Activated T-helper 2 cell treated with anti-CD3 and anti-CD28 coated beads, Interferon-gamma antibody, Interleukin-2, Interleukin-4, amounts not matched to agents 10 μg/mL and 5 μg/mL and 100 μg/mL, durations not matched to agents 14 hours and 24 hours and 36 hours (primary cell): ENCODE measurements at regions of chr14 and their contacts with region 1.

Region 1: DNA sequence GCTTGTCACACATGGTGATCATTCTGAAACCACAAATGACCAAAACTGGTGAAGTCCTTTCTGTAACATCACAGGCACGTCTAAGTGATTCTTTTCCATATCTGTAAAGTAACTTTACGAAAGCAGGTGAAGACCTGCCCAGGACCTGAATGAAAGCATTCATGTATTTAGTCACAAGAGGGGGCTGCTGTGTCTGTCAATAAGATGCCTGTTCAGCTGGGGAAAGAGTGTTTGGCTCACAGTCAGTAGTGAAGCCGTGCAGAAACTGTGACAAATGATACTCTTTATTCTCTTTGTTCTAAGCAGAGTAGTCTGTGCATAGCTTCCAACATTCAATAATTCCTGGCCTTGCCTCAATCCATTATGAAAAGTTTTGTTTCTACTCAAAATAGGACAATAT is 373.5 kb upstream of the OR4E1 start:
- DNase-seq: peak; percentile 14
- H3K4me3 Mint-ChIP-seq: peak overlapping the region; percentile 57
- H3K27ac Mint-ChIP-seq: peak overlapping the region; percentile 83
- H3K4me1 Mint-ChIP-seq: peaks cover 26% of the 10 kb centered on the region
- H3K27me3 Mint-ChIP-seq: no peaks in the 10 kb centered on the region

Region 2: DNA sequence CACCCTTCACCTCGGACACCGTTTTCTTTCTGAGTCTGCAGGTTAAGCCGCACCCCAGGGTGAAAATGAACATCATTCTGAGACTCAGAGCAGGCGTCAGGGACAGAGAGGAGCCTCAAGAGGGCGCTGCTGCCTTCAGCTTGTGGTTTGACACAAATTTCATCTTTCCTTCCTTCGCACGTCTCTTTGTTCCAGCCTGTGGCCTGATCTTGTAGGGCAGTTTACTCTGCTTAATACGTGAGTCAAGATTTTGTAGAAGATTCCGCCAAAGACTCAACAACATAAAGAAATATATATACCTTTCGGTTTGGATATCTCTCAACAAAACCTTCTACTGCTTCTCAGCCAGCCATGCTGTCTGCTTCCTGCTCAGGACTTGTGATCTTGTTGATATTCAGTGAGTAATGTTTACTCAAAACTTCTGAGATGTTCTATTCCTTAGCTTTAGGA is 44.2 kb before region 1 on chr14:
- intact Hi-C with region 1: loop called (anchors 2 kb)
- DNase-seq: peak; percentile 66
- H3K4me3 Mint-ChIP-seq: peak overlapping the region; percentile 74
- H3K27ac Mint-ChIP-seq: peak overlapping the region; percentile 86
- H3K4me1 Mint-ChIP-seq: peaks cover 32% of the 10 kb centered on the region
- H3K27me3 Mint-ChIP-seq: no peaks in the 10 kb centered on the region

Region 3: GRCh38 chr14:22073801-22074200 is 26.7 kb after region 1 on chr14:
- intact Hi-C with region 1: no loop called
- DNase-seq: no peak
- H3K4me3 Mint-ChIP-seq: no peak overlapping the region
- H3K27ac Mint-ChIP-seq: peak overlapping the region; percentile 52
- H3K4me1 Mint-ChIP-seq: peaks cover 41% of the 10 kb centered on the region
- H3K27me3 Mint-ChIP-seq: no peaks in the 10 kb centered on the region

Region 4: GRCh38 chr14:22084393-22085281 is 37.5 kb after region 1 on chr14:
- intact Hi-C with region 1: loop called (anchors 5 kb)
- DNase-seq: no peak
- H3K4me3 Mint-ChIP-seq: peak overlapping the region; percentile 47
- H3K27ac Mint-ChIP-seq: peak overlapping the region; percentile 64
- H3K4me1 Mint-ChIP-seq: peaks cover 22% of the 10 kb centered on the region
- H3K27me3 Mint-ChIP-seq: no peaks in the 10 kb centered on the region